Gastrocnemius medialis (tissue), 4 donors: ENCODE measurements at regions of chr9 and their contacts with region 1.

Region 1: GRCh38 chr9:37422289-37423104 is at the start of gene GRHPR:
- DNase-seq: peak; percentile 83 to 88
- ATAC-seq: peak; percentile 93 to 94
- H3K4me3 ChIP-seq: peak within 1 kb of the TSS; percentile 80 to 96 (median 92)
- H3K27ac ChIP-seq: peak within 1 kb of the TSS; percentile 86 to 94 (median 92)
- H3K4me1 ChIP-seq: peaks cover 25 to 27% of the 10 kb centered on the region in 2 donors
- H3K27me3 ChIP-seq: no peaks in the 10 kb centered on the region
- CTCF ChIP-seq: no peak
- POLR2A ChIP-seq: peak; percentile 69 to 75
- total RNA-seq, gene GRHPR: 119 to 138 (median 128) TPM

Region 2: DNA sequence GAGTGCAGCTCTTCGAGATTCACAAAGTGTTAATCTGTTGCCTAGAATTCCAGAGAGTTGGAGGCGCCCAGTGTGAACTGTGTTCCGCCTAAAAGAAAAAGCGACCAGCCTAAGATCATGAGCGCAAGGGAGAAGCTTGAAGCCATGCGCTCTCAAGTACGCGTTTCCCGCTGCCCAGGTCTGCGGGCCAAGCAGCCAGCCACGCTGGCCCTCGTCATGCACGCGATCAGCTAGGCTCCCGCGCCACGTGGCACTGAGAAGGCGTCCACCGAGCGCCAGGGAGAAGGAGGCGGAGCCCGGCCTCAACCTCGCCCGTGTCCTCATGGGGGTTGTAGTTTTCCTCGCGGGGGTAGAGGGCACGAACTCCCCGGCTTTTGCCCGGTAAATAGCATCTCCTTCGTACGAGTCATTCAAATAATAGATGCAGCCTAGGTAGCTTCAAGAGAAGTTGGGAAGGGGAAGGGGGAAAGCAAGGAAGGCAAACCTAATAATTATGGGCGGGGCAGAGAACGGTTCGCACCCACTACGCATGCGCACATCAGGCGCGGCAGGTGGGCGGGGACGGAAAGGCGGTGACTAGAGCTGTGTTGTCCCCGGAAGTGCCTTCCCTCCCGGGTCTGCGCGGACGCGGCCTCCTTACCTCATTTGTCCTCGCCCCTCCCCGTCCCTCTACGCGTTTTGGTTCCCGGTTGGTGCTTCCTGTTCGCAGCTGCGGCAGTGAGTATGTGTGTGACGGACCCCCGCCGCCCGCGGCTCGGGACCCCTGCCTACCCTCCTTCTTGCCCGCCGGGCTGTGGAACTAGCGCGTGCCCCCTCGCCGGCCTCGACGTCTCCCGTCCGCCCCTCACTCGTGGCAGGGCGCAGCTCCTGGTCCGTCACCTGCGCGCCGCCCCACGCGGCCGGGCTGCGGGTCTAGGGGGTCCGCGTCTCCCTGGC is 302.3 kb before region 1 on chr9 and contains the start of gene ZCCHC7:
- in situ Hi-C with region 1: no loop called
- intact Hi-C with region 1: loop called (anchors 5 kb)
- DNase-seq: peak; percentile 93 to 94
- ATAC-seq: peak; percentile 96 to 97
- H3K4me3 ChIP-seq: peak within 1 kb of the TSS; percentile 89 to 100 (median 96)
- H3K27ac ChIP-seq: peak within 1 kb of the TSS; percentile 91 to 98 (median 97)
- H3K4me1 ChIP-seq: peaks cover 17 to 19% of the 10 kb centered on the region in 2 donors
- H3K27me3 ChIP-seq: no peaks in the 10 kb centered on the region
- CTCF ChIP-seq: no peak
- POLR2A ChIP-seq: peak; percentile 85 to 88
- total RNA-seq, gene ZCCHC7: 4.8 to 11.2 (median 6.9) TPM

Region 3: DNA sequence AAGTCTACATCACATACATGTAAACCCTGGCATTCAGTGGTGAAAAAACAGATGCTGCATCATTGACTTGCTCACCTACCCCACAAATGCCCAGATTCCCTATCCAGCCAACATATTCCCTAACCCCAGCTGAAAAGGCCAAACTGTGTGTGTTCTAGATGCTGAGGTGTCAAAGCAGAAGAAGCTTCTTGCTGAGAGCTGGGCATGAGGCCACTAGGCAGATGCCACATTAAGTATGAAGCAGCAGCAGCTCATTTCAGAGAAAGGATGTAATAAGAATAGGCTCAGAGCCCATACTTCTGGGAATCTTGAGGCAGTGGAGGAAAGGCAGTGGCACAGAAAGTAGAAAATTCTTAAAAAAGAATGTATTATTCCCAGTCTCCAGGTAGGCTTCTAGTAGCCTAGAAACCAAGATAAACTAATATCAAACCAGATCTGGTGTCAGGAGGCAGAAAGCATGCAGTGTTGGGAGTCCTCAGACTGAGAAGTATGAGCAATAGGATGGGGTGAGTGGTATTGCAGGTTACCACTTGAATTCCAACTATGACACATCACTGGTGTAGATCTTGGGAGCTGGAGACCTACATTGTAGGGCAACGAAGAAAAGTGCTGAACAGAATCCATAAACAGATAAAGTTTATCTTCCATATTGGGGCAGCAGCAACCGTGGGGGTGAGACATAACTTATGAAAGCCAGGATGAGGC is 71.9 kb before region 1 on chr9:
- in situ Hi-C with region 1: no loop called
- intact Hi-C with region 1: no loop called
- DNase-seq: no peak
- ATAC-seq: no peak
- H3K4me3 ChIP-seq: no peak overlapping the region
- H3K27ac ChIP-seq: no peak overlapping the region
- H3K4me1 ChIP-seq: no peaks in the 10 kb centered on the region
- H3K27me3 ChIP-seq: no peaks in the 10 kb centered on the region
- CTCF ChIP-seq: no peak
- POLR2A ChIP-seq: no peak